Tibial artery (tissue), 4 donors: ENCODE measurements at regions of chr1 and their contacts with region 1.

Region 1: DNA sequence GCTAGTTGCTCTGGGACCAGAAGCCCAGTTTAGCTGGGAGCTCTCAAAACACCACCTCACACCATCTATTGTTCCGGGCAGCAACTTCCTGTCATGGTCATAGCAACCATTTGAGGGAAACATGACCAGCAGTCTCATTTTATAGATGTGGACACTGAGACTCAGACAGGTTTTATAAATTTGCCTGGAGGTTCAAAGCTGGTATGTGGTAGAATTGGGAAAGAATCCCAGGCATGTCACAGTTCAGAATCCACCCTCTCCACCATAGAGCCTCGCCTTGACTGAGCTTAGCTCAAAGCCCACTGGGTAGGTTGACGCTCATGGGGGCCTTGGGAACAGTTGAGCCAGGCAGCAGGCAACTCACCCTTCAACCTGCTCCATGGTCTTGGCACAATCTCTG is 13.9 kb upstream of the TRIM67 start:
- DNase-seq: no peak
- H3K4me3 ChIP-seq: no peak overlapping the region
- H3K27ac ChIP-seq: no peak overlapping the region
- H3K4me1 ChIP-seq: no peaks in the 10 kb centered on the region
- H3K27me3 ChIP-seq: no peaks in the 10 kb centered on the region
- CTCF ChIP-seq: no peak

Region 2: DNA sequence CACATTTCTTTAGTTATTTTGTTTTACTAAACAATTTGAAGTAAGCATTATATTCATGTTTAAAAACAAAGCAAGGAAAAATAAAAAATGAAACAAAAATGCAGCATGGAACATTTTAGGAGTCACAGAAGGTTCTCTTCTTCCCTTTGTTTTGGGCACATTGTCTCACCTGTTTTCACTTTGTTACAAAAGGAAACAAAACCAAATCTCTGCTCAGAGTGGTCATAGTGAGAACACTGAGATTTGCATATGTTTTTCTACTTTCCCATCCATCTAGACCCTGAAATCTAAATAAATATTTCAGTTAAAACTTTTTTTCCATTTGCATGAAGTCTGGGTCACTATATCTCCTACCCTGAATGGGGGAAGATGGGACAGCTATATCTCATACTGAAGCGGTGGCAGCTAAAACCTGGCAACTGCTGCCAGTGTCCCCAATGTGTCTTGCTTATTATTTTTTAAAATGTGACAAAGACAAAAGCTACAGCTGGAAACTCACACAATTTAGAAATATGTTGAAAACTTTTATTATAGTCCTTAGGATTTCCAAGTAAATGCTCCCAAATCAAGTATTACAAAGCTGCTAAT is 186.3 kb after region 1 on chr1:
- intact Hi-C with region 1: no loop called
- DNase-seq: no peak
- H3K4me3 ChIP-seq: peak overlapping the region; percentile 93 to 97
- H3K27ac ChIP-seq: no peak overlapping the region
- H3K4me1 ChIP-seq: peaks cover 5 to 51% (median 31%) of the 10 kb centered on the region in 4 donors
- H3K27me3 ChIP-seq: no peaks in the 10 kb centered on the region
- CTCF ChIP-seq: no peak

Region 3: DNA sequence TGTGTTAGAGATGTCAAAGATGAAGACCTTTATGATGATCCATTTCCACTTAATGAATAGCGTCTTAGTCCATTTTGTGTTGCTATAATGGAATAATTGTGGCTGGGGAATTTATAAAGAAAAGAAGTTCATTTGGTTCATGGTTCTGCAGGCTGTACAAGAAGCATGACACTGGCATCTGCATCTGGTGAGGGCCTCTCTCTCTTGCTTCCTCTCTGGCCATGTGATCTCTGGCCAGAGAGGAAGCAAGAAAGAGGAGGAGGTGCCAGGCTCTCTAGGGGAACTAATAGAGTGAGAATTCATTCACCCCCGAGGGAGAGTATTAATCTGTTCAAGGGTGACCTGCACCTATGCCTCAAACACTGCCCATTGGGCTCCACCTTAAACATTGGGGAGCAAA is 721.4 kb after region 1 on chr1:
- intact Hi-C with region 1: no loop called
- DNase-seq: peak in 1 of 2 donors; percentile 29
- H3K4me3 ChIP-seq: no peak overlapping the region
- H3K27ac ChIP-seq: no peak overlapping the region
- H3K4me1 ChIP-seq: no peaks in the 10 kb centered on the region
- H3K27me3 ChIP-seq: no peaks in the 10 kb centered on the region
- CTCF ChIP-seq: no peak

Region 4: DNA sequence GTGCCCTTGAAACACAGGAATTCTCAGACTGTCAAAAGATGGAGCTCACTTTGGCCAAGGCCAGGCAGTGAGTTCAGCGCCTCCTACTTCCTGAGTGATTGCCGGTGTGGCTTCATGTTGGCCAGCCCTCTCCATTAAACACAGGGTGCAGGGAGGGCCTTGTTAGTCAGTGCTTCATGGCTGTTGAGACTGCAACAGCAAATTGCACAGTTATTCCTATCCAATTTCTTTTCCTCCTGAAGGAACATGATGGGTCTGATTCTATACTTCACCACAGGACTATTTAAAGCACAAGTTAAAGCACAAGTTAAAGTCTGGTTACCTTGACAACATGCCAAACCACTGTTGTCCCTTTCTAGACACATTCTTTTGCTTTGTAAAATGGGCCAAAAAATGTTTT is 1325.4 kb after region 1 on chr1:
- intact Hi-C with region 1: loop called (anchors 5 kb)
- DNase-seq: peak in 1 of 2 donors; percentile 46
- H3K4me3 ChIP-seq: no peak overlapping the region
- H3K27ac ChIP-seq: no peak overlapping the region
- H3K4me1 ChIP-seq: peaks cover 0 to 26% (median 3%) of the 10 kb centered on the region in 4 donors
- H3K27me3 ChIP-seq: no peaks in the 10 kb centered on the region
- CTCF ChIP-seq: no peak